ENCODE measurements at regions of chr17 and their contacts with region 1.

Region 1: DNA sequence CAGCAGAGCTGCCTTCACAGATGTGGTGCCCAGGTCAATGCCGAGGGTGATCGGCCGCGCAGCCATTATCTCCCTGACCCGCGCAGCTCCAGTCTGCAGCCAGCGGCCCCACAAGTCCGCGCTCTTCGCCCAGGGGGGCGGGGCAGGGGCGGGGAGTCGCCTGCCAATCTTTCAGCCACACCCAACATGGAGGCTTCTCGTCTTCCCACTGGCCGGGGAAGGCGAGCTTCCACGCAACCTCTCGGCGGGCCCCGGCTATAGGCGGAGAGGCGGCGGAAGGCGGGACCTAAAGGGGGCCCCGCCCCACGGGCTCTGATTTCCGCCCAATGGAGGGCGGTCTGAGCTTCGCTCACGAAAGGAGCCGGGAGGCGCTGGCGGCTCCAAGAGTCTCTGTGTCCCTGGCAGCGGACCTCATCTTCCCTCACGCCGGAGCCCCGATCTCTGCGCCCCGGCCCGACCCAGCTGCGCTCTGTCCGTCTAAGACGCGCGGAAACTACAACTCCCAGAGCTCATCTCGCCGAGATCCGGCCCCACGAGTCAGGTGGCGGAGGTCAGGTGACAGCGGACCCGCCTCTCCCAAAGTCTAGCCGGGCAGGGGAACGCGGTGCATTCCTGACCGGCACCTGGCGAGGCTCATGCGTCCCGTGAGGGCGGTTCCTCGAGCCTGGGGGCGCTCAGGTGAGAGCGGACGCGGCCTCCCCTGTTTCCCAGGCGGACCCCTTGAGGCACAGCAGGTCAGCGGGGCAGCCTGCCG is at the starts of genes CTNS and SHPK:
- DNase-seq: peak; percentile 97
- ATAC-seq: peak; percentile 97
- H3K4me3 Mint-ChIP-seq: peak within 1 kb of the TSS; percentile 93
- H3K27ac Mint-ChIP-seq: peak within 1 kb of the TSS; percentile 99
- H3K4me1 Mint-ChIP-seq: peaks cover 42% of the 10 kb centered on the region
- H3K27me3 Mint-ChIP-seq: no peaks in the 10 kb centered on the region
- total RNA-seq, gene CTNS: 10.1 to 11.1 TPM
- total RNA-seq, gene SHPK: 12.5 to 15.0 TPM

Region 2: GRCh38 chr17:2592971-2593820 is 1043.1 kb before region 1 on chr17 and contains the start of gene PAFAH1B1:
- CTCF ChIA-PET with region 1: no interaction called
- POLR2A ChIA-PET with region 1: no interaction called
- intact Hi-C with region 1: loop called in 1 of 2 experiments (anchors 2 kb)
- DNase-seq: peak; percentile 98
- ATAC-seq: peak; percentile 84
- H3K4me3 Mint-ChIP-seq: peak within 1 kb of the TSS; percentile 79
- H3K27ac Mint-ChIP-seq: peak within 1 kb of the TSS; percentile 88
- H3K4me1 Mint-ChIP-seq: peaks cover 25% of the 10 kb centered on the region
- H3K27me3 Mint-ChIP-seq: no peaks in the 10 kb centered on the region
- total RNA-seq, gene PAFAH1B1: 163 to 167 TPM

Region 3: DNA sequence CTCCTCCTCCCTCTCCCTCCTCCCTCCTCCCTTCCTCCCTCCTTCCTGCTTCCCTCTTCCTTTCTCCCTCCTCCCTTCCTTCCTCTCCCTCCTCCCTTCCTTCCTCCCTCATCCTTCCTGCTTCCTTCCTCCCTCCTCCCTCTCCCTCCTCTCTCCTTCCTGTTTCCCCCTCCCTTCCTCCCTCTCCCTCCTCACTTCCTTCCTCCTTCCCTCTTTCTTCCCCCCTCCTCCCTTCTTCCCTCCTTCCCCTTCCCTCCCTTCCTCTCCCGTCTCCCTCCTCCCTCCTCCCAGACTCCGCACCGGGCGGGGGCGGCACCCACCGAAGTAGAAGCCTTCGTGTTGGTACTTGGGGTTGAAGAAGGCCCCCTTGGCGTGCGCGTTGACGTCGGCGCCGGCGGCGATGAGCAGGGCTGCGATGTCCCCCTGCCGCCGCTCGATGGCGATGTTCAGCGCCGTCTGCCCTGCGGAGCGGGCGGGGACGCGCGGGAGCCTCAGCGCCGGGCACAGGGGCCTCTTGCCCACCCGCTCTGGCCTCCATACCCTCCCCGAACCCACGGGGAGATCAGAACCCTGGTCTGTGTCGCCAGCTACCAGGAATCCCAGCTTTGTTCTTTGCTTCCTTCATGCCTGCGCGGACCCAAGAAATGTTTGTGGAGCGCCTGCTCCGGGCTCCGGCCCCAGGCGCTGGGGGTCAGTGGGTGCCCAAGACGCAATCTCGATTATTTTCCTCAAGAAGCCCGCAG is 100.9 kb before region 1 on chr17:
- CTCF ChIA-PET with region 1: interaction called, 3 read pairs
- POLR2A ChIA-PET with region 1: no interaction called
- intact Hi-C with region 1: loop called (anchors 1 to 2 kb)
- DNase-seq: peak; percentile 84
- ATAC-seq: peak; percentile 96
- H3K4me3 Mint-ChIP-seq: peak overlapping the region; percentile 21
- H3K27ac Mint-ChIP-seq: no peak overlapping the region
- H3K4me1 Mint-ChIP-seq: peaks cover 5% of the 10 kb centered on the region
- H3K27me3 Mint-ChIP-seq: peaks cover 3% of the 10 kb centered on the region

Region 4: GRCh38 chr17:3668279-3669085 is 32.2 kb after region 1 on chr17 and contains the starts of genes EMC6 and TAX1BP3:
- CTCF ChIA-PET with region 1: interaction called, 3 read pairs
- POLR2A ChIA-PET with region 1: no interaction called
- intact Hi-C with region 1: loop called (anchors 1 kb)
- DNase-seq: peak; percentile 99
- ATAC-seq: peak; percentile 94
- H3K4me3 Mint-ChIP-seq: peak within 1 kb of the TSS; percentile 97
- H3K27ac Mint-ChIP-seq: peak within 1 kb of the TSS; percentile 94
- H3K4me1 Mint-ChIP-seq: peaks cover 21% of the 10 kb centered on the region
- H3K27me3 Mint-ChIP-seq: no peaks in the 10 kb centered on the region
- total RNA-seq, gene EMC6: 43.6 to 44.3 TPM
- total RNA-seq, gene TAX1BP3: 12.0 to 14.6 TPM

Region 5: DNA sequence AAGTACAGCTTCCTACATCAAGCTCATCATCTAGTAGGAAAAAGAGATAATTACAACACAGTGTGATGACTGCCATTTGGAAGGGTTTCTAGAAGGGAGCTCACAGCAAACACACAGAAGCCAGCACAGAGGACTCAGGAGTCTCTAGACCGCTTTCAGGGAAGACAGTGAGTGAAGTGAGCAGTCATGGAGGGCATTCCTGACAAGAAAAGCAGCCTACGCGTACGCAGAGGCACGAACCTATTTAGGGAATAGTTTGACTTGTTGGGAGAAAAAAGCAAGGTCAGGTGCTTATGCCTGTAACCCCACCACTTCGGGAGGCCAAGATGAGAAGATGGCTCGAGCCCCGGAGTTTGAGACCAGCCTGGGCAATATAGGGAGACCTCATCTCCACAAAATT is 79.0 kb after region 1 on chr17:
- CTCF ChIA-PET with region 1: no interaction called
- POLR2A ChIA-PET with region 1: no interaction called
- intact Hi-C with region 1: no loop called
- DNase-seq: no peak
- ATAC-seq: no peak
- H3K4me3 Mint-ChIP-seq: no peak overlapping the region
- H3K27ac Mint-ChIP-seq: peak overlapping the region; percentile 52
- H3K4me1 Mint-ChIP-seq: peaks cover 56% of the 10 kb centered on the region
- H3K27me3 Mint-ChIP-seq: no peaks in the 10 kb centered on the region

Region 6: DNA sequence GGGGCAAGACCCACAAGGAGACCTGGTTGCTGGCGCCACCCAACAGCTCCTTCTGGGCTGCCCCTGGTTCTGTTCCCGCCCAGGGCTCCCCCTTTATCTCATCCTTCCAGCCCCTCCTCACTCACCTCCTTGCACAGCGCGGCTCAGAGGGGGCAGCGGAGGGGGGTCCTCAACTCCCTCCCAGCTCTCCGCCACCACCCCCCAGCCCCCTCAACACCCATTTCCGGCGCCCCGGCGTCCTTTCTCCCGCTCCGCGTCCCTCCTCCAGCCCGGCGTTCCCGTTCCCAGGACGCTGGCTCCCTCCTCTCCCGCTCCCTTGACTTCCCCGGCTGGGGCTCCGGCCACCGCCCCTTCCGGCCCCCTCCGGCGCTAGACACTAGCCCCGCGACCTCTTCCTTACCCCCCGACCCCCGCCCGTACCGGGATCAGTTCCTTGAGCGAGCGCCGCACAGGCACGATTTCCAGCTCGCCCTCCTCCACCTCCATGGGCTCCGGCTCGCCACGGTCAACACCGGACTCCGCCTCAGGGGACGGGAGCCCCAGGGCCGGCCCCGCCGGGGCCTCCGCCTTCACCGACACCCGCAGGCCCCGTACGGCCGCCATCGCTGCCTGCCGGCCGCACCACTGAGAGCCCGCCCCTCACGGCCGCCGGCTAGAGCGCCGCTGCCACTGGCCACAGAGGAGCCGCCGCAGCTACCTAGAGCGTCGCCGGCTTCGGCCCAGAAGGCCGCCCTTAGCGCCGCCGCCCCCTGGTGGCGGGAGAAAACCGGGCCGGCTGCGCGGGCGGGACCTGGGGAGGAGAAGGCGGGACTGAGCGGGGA is 209.5 kb after region 1 on chr17 and contains the start of gene NCBP3:
- CTCF ChIA-PET with region 1: interaction called, 3 read pairs
- POLR2A ChIA-PET with region 1: no interaction called
- intact Hi-C with region 1: loop called in 1 of 2 experiments (anchors 1 kb)
- DNase-seq: peak; percentile 96
- ATAC-seq: peak; percentile 93
- H3K4me3 Mint-ChIP-seq: peak within 1 kb of the TSS; percentile 84
- H3K27ac Mint-ChIP-seq: peak within 1 kb of the TSS; percentile 91
- H3K4me1 Mint-ChIP-seq: peaks cover 19% of the 10 kb centered on the region
- H3K27me3 Mint-ChIP-seq: no peaks in the 10 kb centered on the region
- total RNA-seq, gene NCBP3: 35.9 to 44.6 TPM